Left ventricle myocardium inferior (tissue), 1 donor: ENCODE measurements at regions of chr4 and their contacts with region 1.

Region 1: DNA sequence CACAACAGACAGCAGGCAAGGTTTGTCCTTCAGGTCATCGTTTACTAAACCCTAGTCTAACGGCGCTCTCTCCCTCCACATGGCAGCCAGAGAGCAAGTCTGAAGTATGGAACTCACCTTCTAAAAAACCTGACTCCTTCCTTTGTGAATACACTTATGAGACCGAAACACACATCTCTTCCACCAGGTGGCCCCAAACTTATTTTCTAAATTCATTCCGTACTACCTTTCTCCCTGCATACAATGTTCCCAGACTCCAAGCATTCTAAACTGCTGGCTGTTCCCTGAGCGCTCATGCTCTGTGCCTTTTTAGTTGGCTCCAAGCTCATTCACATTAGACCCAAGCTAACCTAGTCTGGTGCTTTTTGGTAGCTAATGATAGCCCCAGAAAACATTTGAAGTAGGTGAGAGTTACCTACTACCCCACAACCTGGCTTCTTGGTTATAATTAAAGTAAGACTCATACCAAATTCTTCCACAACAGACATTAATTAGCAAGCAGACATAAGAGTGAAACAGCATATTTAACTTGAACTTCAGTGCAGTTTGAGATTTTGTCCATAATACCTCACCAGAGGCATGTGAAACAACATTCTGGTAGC is 67.6 kb upstream of the DCLK2 start:
- DNase-seq: no peak
- H3K4me3 ChIP-seq: no peak overlapping the region
- H3K27ac ChIP-seq: peak overlapping the region; percentile 7
- H3K4me1 ChIP-seq: peaks cover 24% of the 10 kb centered on the region
- H3K27me3 ChIP-seq: no peaks in the 10 kb centered on the region
- CTCF ChIP-seq: peak; percentile 70

Region 2: GRCh38 chr4:149441338-149441737 is 569.3 kb before region 1 on chr4:
- intact Hi-C with region 1: no loop called
- DNase-seq: no peak
- H3K4me3 ChIP-seq: no peak overlapping the region
- H3K27ac ChIP-seq: no peak overlapping the region
- H3K4me1 ChIP-seq: no peaks in the 10 kb centered on the region
- H3K27me3 ChIP-seq: no peaks in the 10 kb centered on the region
- CTCF ChIP-seq: no peak

Region 3: GRCh38 chr4:149951152-149951900 is 59.3 kb before region 1 on chr4:
- intact Hi-C with region 1: no loop called
- DNase-seq: no peak
- H3K4me3 ChIP-seq: no peak overlapping the region
- H3K27ac ChIP-seq: no peak overlapping the region
- H3K4me1 ChIP-seq: no peaks in the 10 kb centered on the region
- H3K27me3 ChIP-seq: no peaks in the 10 kb centered on the region
- CTCF ChIP-seq: no peak

Region 4: GRCh38 chr4:150209140-150209829 is 198.7 kb after region 1 on chr4:
- intact Hi-C with region 1: loop called (anchors 2 kb)
- DNase-seq: peak; percentile 68
- H3K4me3 ChIP-seq: no peak overlapping the region
- H3K27ac ChIP-seq: no peak overlapping the region
- H3K4me1 ChIP-seq: peaks cover 68% of the 10 kb centered on the region
- H3K27me3 ChIP-seq: no peaks in the 10 kb centered on the region
- CTCF ChIP-seq: peak; percentile 75

Region 5: GRCh38 chr4:150708004-150708403 is 697.4 kb after region 1 on chr4:
- intact Hi-C with region 1: no loop called
- DNase-seq: no peak
- H3K4me3 ChIP-seq: no peak overlapping the region
- H3K27ac ChIP-seq: no peak overlapping the region
- H3K4me1 ChIP-seq: no peaks in the 10 kb centered on the region
- H3K27me3 ChIP-seq: no peaks in the 10 kb centered on the region
- CTCF ChIP-seq: no peak